Motor neuron (in vitro differentiated cells): ENCODE measurements at regions of chr4 and their contacts with region 1.

Region 1: GRCh38 chr4:108834835-108835384 is 72.1 kb upstream of the ETNPPL start:
- ATAC-seq: peak in 7 of 8 experiments; percentile 27 to 83 (median 50)
- H3K4me3 ChIP-seq: no peak overlapping the region
- H3K27ac ChIP-seq: no peak overlapping the region
- H3K4me1 ChIP-seq: no peaks in the 10 kb centered on the region

Region 2: GRCh38 chr4:109302361-109303139 is 467.6 kb after region 1 on chr4 and contains the start of gene COL25A1:
- in situ Hi-C with region 1: loop called in 2 of 9 experiments (anchors 25 kb)
- ATAC-seq: peak; percentile 88 to 97 (median 94)
- H3K4me3 ChIP-seq: peak within 1 kb of the TSS; percentile 39 to 52 (median 43)
- H3K27ac ChIP-seq: no peak within 1 kb of the TSS
- H3K4me1 ChIP-seq: peaks cover 3 to 5% of the 10 kb centered on the region in 2 donors
- total RNA-seq, gene COL25A1: 1.3 to 15.1 (median 2.7) TPM

Region 3: DNA sequence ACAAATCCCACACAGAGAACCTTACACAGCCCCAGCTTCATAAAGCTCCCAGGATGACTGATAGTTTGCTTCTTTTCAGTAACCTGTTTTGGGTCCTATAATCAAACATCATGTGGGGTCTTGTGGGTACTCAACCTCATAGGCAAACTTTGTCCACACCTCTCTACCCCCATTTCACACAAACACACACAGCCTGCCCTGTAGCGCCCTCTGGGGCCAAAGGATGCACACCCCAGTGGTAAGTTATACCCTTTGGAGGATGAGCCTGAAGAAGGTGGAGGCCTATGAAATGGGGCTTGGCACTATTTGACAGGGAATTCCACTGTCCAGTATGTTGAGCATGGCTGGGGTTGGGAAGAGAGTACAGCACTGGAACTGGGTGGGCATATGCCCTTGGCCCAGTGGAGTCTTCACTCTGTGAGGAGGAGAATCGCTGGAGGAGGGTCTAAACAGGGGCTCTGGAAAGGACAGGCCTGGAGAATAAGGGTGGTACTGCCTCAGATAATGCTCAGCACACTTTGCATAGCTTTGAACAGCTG is 498.1 kb after region 1 on chr4:
- in situ Hi-C with region 1: no loop called
- ATAC-seq: peak in 3 of 8 experiments; percentile 46 to 76 (median 71)
- H3K4me3 ChIP-seq: no peak overlapping the region
- H3K27ac ChIP-seq: no peak overlapping the region
- H3K4me1 ChIP-seq: no peaks in the 10 kb centered on the region

Region 4: DNA sequence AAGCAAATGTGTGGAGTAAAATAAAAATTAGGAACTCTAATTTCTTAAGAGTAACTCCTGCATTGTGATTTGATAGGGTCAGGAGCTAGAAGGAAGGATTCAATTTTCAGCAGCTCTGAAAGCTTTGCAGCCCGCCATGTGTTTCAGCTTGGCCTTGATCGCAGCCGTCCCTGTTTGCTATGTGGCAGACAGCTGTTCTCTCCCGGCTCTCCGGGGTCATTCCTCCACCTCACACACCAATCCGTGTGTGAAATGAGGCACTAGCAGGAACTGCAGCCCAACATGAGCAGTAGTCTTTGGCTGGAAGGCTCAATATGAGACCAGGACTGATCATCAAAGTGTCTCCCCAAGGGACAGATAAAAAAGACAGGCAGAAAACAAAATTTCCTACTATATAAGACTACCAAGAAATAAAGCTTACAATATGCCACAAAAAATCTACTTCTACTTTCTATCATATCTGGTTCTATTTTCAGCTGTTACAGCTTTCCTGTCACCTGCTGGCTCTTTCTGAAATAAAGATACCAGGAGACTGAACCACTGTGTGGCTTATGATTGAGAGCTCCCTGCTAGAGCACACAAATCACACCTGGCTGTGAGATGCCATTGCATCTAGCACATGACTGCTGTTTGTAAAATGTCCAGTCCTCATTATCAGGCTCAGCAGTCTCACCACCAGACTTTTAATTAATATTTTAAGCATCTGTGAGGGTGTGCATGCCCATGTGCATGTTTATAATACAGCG is 554.6 kb after region 1 on chr4:
- in situ Hi-C with region 1: loop called in 2 of 9 experiments (anchors 25 kb)
- ATAC-seq: peak in 7 of 8 experiments; percentile 36 to 80 (median 63)
- H3K4me3 ChIP-seq: no peak overlapping the region
- H3K27ac ChIP-seq: no peak overlapping the region
- H3K4me1 ChIP-seq: peaks cover 0 to 17% of the 10 kb centered on the region in 2 donors

Region 5: DNA sequence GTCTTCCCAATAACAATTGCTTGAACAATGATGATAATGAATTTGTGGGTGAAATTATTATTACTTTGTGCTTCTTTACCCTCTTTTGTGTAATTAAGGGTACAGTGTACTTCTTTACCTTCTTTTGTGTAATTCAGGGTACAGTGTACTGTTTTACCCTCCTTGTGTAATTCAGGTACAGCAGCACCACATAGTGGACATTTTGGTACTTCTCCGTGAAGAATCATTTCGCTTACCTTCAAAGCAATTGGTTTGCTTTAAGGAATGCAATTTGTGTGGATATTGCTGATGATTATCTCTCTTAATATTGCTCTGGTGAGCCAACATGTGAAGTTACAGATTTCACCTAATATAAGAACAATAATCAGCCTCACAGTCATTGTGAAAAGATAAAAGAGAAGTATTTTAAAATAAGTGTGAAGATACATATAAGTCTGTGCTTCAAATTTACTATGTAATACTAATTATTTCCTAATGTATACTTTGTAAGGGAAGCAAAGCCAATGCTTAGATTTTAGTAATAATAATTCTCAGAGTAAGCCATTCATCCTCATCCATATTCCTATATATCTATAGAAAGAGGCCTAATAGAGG is 571.5 kb after region 1 on chr4:
- in situ Hi-C with region 1: loop called in 3 of 9 experiments (anchors 25 kb)
- ATAC-seq: peak; percentile 47 to 89 (median 60)
- H3K4me3 ChIP-seq: no peak overlapping the region
- H3K27ac ChIP-seq: no peak overlapping the region
- H3K4me1 ChIP-seq: peaks cover 0 to 5% of the 10 kb centered on the region in 2 donors

Region 6: DNA sequence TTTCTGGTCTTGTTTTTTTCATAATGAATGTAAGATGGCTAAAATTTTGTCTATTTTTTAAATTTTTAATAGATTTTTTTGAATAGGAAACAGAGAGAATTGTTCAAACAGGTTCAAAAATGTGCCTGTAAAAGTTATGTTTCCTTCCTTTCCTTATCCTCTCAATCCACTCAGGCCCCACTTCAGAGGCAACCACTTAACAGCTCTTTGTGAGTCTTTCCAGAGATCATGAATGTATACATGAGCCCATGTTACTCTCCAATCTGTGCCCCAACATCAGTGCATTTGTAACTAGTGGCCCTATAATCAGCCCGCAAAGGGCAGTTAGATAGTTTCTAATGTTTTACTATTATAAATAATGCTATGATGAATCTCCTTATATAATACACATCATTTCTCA is 952.9 kb after region 1 on chr4:
- in situ Hi-C with region 1: no loop called
- ATAC-seq: no peak
- H3K4me3 ChIP-seq: no peak overlapping the region
- H3K27ac ChIP-seq: no peak overlapping the region
- H3K4me1 ChIP-seq: no peaks in the 10 kb centered on the region